Activated naive CD4-positive, alpha-beta T cell treated with anti-CD3 and anti-CD28 coated beads for 36 hours (primary cell): ENCODE measurements at regions of chr19 and their contacts with region 1.

Region 1: GRCh38 chr19:662962-663681 is at the start of gene RNF126:
- DNase-seq: peak; percentile 95
- H3K4me3 Mint-ChIP-seq: peak within 1 kb of the TSS; percentile 99
- H3K27ac Mint-ChIP-seq: peak within 1 kb of the TSS; percentile 98
- H3K4me1 Mint-ChIP-seq: peaks cover 40% of the 10 kb centered on the region
- H3K27me3 Mint-ChIP-seq: no peaks in the 10 kb centered on the region
- total RNA-seq, gene RNF126: 99.5 to 108 TPM

Region 2: GRCh38 chr19:372306-372890 is 290.7 kb before region 1 on chr19:
- CTCF ChIA-PET with region 1: no interaction called
- intact Hi-C with region 1: no loop called
- DNase-seq: no peak
- H3K4me3 Mint-ChIP-seq: no peak overlapping the region
- H3K27ac Mint-ChIP-seq: no peak overlapping the region
- H3K4me1 Mint-ChIP-seq: no peaks in the 10 kb centered on the region
- H3K27me3 Mint-ChIP-seq: peaks cover 13% of the 10 kb centered on the region

Region 3: DNA sequence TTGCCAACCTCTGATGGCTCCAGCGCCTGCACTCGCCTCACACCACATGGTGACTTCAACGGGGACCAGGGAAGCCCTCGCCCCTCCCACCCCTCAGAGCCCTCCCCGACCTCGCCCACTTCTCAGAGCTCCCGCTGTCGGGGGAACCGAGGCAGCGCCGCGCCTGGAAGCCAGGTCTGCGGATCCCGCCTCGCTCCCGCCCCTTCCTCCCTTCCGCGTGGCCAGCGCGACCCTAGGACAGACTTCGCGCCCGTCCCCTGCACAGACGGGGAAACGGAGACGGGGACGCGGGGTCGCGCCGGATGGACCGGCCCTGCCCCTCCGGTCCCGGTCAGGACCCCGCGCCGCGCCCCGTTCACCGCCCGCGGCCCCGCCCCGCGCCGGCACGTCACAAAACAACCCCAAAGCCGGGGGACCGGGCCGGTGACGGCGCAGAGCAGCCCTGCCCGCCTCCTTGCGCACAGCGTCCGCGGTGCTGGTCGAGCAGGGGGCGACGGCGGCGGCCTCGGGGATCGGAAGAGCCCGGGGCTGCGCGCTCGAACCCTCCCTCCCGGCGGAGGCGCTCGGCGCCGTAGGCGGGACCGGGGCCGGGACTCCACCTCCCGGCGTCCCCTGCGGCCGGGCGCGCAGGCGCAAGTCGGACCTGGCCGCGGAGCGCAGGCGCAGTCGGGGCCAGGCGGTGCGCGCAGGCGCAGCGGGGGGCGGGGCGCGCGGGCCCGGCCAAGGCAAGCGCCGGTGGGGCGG is 131.9 kb before region 1 on chr19:
- CTCF ChIA-PET with region 1: no interaction called
- intact Hi-C with region 1: loop called (anchors 5 kb)
- DNase-seq: peak; percentile 82
- H3K4me3 Mint-ChIP-seq: peak overlapping the region; percentile 77
- H3K27ac Mint-ChIP-seq: peak overlapping the region; percentile 77
- H3K4me1 Mint-ChIP-seq: peaks cover 26% of the 10 kb centered on the region
- H3K27me3 Mint-ChIP-seq: peaks cover 3% of the 10 kb centered on the region

Region 4: GRCh38 chr19:610801-611505 is 52.2 kb before region 1 on chr19:
- CTCF ChIA-PET with region 1: no interaction called
- intact Hi-C with region 1: loop called (anchors 1 kb)
- DNase-seq: peak; percentile 73
- H3K4me3 Mint-ChIP-seq: peak overlapping the region; percentile 82
- H3K27ac Mint-ChIP-seq: peak overlapping the region; percentile 94
- H3K4me1 Mint-ChIP-seq: peaks cover 28% of the 10 kb centered on the region
- H3K27me3 Mint-ChIP-seq: no peaks in the 10 kb centered on the region

Region 5: GRCh38 chr19:680287-681028 is 17.3 kb after region 1 on chr19:
- CTCF ChIA-PET with region 1: interaction called, 3 read pairs
- intact Hi-C with region 1: loop called (anchors 1 kb)
- DNase-seq: peak; percentile 100
- H3K4me3 Mint-ChIP-seq: peak overlapping the region; percentile 94
- H3K27ac Mint-ChIP-seq: peak overlapping the region; percentile 99
- H3K4me1 Mint-ChIP-seq: peaks cover 11% of the 10 kb centered on the region
- H3K27me3 Mint-ChIP-seq: peaks cover 5% of the 10 kb centered on the region

Region 6: DNA sequence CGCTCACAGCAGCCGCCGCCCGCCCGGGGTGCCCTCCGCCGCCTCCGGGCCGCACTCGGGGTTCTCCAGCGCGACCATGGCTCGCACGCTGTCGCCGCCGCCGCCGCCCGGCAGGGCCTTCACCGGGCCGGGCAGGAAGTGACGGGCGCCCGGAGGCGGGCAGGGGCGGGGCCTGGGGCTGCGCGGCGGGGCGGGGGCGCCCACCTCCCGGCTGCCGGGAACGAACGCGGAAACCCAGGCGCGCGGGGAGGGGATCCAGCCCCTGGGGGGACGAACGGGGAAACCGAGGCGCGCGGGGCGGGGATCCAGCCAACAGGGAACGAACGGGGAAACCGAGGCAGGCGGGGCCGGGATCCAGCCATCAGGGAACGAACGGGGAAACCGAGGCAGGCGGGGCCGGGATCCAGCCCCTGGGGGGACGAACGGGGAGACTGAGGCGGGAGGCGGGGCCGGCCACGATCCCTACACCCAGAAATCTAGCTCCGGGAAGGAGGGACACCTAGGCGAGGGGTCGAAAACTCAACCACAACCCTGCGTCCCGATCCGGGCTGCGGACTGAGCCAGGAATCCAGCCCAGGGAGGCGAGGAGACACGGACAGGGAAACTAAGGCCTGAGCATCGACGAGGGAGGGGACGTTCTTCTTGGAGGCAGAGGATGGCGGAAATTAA is 250.1 kb after region 1 on chr19 and contains the start of gene R3HDM4:
- CTCF ChIA-PET with region 1: no interaction called
- intact Hi-C with region 1: loop called (anchors 1 kb)
- DNase-seq: peak; percentile 88
- H3K4me3 Mint-ChIP-seq: peak within 1 kb of the TSS; percentile 84
- H3K27ac Mint-ChIP-seq: peak within 1 kb of the TSS; percentile 95
- H3K4me1 Mint-ChIP-seq: peaks cover 34% of the 10 kb centered on the region
- H3K27me3 Mint-ChIP-seq: peaks cover 2% of the 10 kb centered on the region
- total RNA-seq, gene R3HDM4: 111 to 120 TPM

Region 7: DNA sequence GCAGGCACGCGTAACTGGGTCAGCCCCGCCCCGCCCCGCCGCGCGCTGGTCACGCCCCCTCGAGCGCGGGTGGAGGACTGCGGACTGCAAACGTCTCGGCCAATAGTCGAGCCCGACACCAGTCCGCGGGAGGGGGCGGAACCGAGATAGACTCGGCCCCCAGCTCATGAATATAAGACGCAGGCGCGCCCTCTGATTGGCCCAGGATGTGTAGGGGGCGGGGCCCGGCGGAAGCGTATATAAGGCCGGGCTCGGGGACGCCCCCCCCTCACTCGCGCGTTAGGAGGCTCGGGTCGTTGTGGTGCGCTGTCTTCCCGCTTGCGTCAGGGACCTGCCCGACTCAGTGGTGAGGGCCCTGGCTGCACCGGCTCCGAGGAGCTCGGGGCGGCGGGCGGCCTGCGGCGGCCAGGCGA is 605.9 kb after region 1 on chr19 and contains the start of gene CIRBP:
- CTCF ChIA-PET with region 1: no interaction called
- intact Hi-C with region 1: loop called (anchors 5 kb)
- DNase-seq: peak; percentile 99
- H3K4me3 Mint-ChIP-seq: peak within 1 kb of the TSS; percentile 87
- H3K27ac Mint-ChIP-seq: peak within 1 kb of the TSS; percentile 83
- H3K4me1 Mint-ChIP-seq: peaks cover 64% of the 10 kb centered on the region
- H3K27me3 Mint-ChIP-seq: no peaks in the 10 kb centered on the region
- total RNA-seq, gene CIRBP: 167 to 183 TPM